ENCODE measurements at regions of chrX and their contacts with region 1.

Region 1: DNA sequence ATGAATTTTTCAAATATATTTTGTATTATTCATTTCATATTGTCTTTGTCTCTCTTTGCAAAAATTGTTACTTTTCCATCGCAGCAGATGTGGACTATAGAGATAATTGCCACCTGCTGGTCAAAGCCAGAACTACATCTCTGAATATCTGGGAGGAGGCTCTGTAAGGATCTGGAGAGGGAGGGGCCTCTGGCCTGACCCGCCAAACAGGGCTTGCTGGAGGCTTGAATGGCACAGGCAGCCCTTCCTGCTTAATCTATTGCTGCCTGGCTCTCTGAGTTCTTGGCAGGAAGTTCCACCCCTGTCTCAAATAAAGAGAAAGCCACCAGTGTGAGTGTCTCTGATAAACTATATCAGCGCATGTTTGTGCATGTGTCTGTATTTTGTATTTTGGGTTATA is 132.4 kb downstream of the ZMAT1 start:
- DNase-seq: peak; percentile 48 to 94 (median 82)

Region 2: GRCh38 chrX:101552714-101553113 is 246.7 kb before region 1 on chrX:
- intact Hi-C with region 1: no loop called
- DNase-seq: no peak

Region 3: DNA sequence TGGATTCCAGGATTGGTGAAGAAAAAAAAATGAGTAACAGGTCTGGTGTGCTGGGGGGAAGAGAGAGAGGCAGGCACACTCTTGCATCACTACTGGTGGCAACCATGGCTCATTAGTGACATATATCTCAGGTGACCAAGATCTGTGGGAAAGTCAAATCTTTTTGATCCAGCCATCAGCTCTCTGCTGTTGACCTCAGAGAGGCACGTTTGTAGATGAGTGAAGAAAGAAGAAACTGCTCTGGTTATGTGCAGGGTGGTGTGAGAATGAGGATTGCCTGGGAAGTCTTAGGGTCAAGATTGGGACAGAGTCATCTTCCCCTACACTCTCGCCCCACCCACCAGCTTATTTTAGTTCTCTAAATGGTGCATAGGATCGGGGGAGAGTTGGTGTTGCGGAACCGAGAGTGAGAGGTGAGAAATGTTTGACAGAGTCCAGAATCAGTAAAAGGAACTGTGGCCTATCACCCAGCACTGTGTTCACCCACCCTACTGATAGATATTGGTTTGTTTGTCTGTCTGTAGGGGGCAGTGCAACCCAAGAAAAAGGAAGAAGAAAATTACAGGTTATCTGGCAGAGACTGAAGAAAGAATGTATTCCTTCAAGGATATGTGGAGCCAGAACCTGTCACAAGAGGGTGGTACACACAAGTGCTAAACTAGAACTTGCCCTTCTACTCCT is 203.5 kb before region 1 on chrX:
- intact Hi-C with region 1: loop called (anchors 10 kb)
- DNase-seq: peak in 22 of 42 donors; percentile 3 to 73 (median 40)

Measured in head of caudate nucleus (tissue), 42 donors.